MCF 10A (cell line): ENCODE measurements at regions of chr5 and their contacts with region 1.

Region 1: DNA sequence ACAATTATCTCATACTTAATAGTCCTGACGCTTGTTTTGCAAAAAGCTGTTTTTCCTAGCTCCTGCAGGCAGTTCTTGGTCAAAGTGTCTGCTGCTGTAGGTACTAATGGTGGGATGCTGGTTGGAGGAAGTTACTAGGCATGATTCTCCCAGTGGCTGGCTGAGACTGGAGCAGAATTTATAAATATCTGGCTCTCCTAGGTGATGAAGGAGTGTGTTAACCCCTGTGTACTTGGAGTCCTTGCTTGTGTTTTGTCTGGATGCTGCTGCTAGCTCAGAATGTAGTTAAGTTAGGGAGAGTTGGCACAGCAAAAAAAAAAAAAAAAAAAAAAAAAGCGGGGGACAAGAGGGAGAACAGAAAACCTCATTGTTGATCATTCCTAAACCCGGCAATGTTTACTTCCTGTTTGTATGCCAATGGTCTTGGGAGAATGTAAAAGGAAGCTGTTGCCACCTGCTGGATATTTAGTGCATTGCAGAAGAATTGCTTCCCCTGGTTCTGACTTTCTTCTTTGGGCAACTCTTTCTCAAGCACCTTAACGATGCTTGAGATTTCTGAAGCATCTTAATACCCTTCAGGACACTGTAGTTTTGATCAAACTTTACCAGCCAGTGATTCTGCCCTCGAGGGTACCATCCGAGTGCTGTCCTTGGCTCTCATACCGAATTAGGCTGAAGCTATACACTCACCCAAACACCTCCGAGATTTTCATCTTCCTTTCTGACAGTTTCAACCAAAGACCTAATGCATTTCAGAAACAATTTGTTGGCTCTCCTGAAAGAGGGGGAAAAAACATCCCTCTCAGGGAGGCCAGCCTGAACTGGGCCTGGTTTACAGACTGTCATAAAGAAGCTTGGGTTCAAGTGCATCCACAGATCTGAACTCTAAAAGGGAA is 71.7 kb upstream of the WWC1 start:
- DNase-seq: peak; percentile 89
- H3K4me3 Mint-ChIP-seq: no peak overlapping the region
- H3K27ac Mint-ChIP-seq: peak overlapping the region; percentile 37
- H3K4me1 Mint-ChIP-seq: no peaks in the 10 kb centered on the region
- H3K27me3 Mint-ChIP-seq: peaks cover 31% of the 10 kb centered on the region
- CTCF ChIP-seq: peak; percentile 90

Region 2: DNA sequence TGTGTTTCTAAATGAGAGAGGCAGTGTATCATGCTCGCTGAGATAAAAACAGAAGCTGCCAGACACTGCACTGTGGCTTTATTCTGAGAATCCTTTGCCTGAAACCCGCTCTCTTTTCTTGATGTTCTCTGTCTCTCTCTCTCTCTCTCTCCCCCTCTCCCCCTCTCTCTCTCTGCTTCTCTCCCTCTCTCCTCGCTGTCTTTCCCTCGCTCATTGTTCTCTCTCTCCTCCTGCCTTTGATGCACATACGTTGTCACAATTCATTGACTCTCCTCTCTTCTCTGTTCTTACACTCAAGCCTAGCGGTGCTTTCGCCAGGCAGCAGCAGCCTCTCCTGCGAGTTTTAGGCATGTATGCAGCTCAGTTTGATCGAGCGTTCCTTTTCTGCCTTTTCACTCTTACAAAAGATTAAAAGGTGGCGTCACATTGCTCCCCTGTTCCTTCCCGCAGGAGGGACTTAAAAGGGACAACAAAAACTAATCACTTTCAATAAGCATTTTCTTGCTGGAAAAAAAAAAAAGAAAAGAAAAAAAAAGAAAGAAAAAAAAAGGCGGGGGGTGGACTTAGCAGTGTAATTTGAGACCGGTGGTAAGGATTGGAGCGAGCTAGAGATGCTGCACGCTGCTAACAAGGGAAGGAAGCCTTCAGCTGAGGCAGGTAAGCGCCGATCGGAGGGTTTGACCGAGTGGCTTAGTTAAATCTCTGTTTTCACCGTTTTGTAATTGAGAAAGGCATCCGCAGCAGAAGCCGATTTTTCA is 646.2 kb before region 1 on chr5:
- CTCF ChIA-PET with region 1: interaction called, 26 read pairs
- POLR2A ChIA-PET with region 1: interaction called, 3 read pairs
- intact Hi-C with region 1: no loop called
- DNase-seq: peak; percentile 79
- H3K4me3 Mint-ChIP-seq: peak overlapping the region; percentile 50
- H3K27ac Mint-ChIP-seq: no peak overlapping the region
- H3K4me1 Mint-ChIP-seq: peaks cover 26% of the 10 kb centered on the region
- H3K27me3 Mint-ChIP-seq: peaks cover 88% of the 10 kb centered on the region
- CTCF ChIP-seq: no peak

Region 3: GRCh38 chr5:167723254-167723871 is 496.4 kb before region 1 on chr5:
- CTCF ChIA-PET with region 1: interaction called, 10 read pairs
- POLR2A ChIA-PET with region 1: no interaction called
- intact Hi-C with region 1: loop called (anchors 1 kb)
- DNase-seq: peak; percentile 94
- H3K4me3 Mint-ChIP-seq: no peak overlapping the region
- H3K27ac Mint-ChIP-seq: peak overlapping the region; percentile 1
- H3K4me1 Mint-ChIP-seq: peaks cover 9% of the 10 kb centered on the region
- H3K27me3 Mint-ChIP-seq: no peaks in the 10 kb centered on the region
- CTCF ChIP-seq: peak; percentile 93

Region 4: GRCh38 chr5:167920589-167920988 is 299.2 kb before region 1 on chr5:
- CTCF ChIA-PET with region 1: no interaction called
- POLR2A ChIA-PET with region 1: no interaction called
- intact Hi-C with region 1: no loop called
- DNase-seq: peak; percentile 30
- H3K4me3 Mint-ChIP-seq: no peak overlapping the region
- H3K27ac Mint-ChIP-seq: no peak overlapping the region
- H3K4me1 Mint-ChIP-seq: no peaks in the 10 kb centered on the region
- H3K27me3 Mint-ChIP-seq: no peaks in the 10 kb centered on the region
- CTCF ChIP-seq: no peak

Region 5: DNA sequence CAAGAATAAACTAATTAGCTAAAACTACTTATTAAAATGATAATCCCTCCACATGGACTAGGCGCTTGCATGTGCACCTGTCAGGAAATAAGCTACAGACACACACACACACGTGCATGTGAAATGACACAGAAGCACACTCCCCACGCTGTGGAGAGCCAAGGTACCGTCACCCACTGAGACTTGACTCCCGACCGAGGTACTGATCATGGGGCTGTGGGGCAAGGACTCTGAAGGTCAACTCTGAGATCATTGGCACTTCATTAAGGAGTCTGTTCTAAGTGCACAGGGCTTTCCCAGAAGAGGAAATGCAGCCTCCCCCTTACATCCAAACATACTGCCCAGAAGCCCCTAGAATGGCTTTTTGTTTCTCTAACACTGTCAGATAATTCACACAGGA is 192.8 kb before region 1 on chr5:
- CTCF ChIA-PET with region 1: interaction called, 10 read pairs
- POLR2A ChIA-PET with region 1: interaction called, 3 read pairs
- intact Hi-C with region 1: no loop called
- DNase-seq: no peak
- H3K4me3 Mint-ChIP-seq: no peak overlapping the region
- H3K27ac Mint-ChIP-seq: no peak overlapping the region
- H3K4me1 Mint-ChIP-seq: no peaks in the 10 kb centered on the region
- H3K27me3 Mint-ChIP-seq: peaks cover 16% of the 10 kb centered on the region
- CTCF ChIP-seq: no peak

Region 6: GRCh38 chr5:168086104-168086610 is 133.6 kb before region 1 on chr5:
- CTCF ChIA-PET with region 1: interaction called, 16 read pairs
- POLR2A ChIA-PET with region 1: interaction called, 3 read pairs
- intact Hi-C with region 1: no loop called
- DNase-seq: peak; percentile 84
- H3K4me3 Mint-ChIP-seq: peak overlapping the region; percentile 22
- H3K27ac Mint-ChIP-seq: no peak overlapping the region
- H3K4me1 Mint-ChIP-seq: peaks cover 9% of the 10 kb centered on the region
- H3K27me3 Mint-ChIP-seq: no peaks in the 10 kb centered on the region
- CTCF ChIP-seq: peak; percentile 5

Region 7: DNA sequence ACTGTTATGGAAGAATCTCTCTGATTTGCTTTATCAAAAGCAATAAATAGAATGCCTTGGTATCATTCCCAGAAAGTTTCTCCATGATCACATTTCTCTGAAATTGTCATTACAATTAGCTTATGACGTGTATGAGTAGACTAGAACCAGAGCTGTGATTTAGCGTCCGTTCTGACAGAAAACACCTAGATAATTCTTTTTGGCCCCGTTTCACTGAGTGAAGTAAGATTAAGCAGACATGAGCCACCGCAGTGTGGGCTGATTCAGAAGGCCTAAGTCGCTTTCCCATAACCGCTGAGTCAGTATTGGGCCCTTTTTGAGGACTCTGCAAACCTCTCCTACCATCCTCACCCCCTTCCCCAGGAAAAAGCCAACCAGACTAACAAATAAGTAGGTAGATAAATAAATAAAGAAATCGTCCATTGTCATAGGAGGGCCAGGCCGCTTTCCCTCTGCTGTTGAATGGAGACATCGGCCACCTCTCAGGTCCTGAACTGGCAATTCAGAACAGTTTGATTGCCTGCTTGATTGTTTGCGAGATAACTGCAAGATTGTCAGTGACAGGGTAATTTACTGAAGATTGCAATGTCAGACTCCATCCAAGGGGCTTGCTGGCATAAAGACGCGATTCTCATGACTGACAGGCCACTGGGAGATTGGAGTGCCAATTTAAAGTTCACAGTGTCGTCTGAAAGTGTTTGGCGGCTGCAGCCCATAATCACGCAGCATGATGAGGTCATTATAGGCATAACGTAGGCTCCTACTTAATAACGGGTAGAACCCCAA is 33.3 kb before region 1 on chr5:
- CTCF ChIA-PET with region 1: interaction called, 16 read pairs
- POLR2A ChIA-PET with region 1: no interaction called
- intact Hi-C with region 1: no loop called
- DNase-seq: no peak
- H3K4me3 Mint-ChIP-seq: no peak overlapping the region
- H3K27ac Mint-ChIP-seq: no peak overlapping the region
- H3K4me1 Mint-ChIP-seq: peaks cover 6% of the 10 kb centered on the region
- H3K27me3 Mint-ChIP-seq: no peaks in the 10 kb centered on the region
- CTCF ChIP-seq: no peak

Region 8: DNA sequence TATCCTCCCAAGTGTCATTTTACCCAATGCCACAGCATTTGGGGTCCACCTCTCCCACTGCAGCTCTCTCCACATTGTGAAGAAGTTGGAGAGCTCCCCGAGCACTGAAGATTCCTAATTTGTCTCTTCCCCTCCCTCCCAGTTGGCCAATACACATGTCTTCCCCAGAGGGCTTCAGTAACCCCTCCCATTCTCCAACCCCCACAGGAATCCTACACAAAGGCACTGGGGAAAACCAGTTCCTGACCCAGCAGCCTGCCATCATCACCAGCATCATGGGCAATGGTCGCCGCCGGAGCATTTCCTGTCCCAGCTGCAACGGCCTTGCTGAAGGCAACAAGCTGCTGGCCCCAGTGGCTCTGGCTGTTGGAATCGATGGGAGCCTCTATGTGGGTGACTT is 15.6 kb before region 1 on chr5:
- CTCF ChIA-PET with region 1: interaction called, 37 read pairs
- POLR2A ChIA-PET with region 1: interaction called, 3 read pairs
- intact Hi-C with region 1: no loop called
- DNase-seq: no peak
- H3K4me3 Mint-ChIP-seq: no peak overlapping the region
- H3K27ac Mint-ChIP-seq: no peak overlapping the region
- H3K4me1 Mint-ChIP-seq: no peaks in the 10 kb centered on the region
- H3K27me3 Mint-ChIP-seq: no peaks in the 10 kb centered on the region
- CTCF ChIP-seq: no peak